Dendritic cell treated with granulocyte-macrophage colony-stimulating factor and Interleukin-4, amounts not matched to agents 40 ng/mL and 50 ng/mL, for 4 days (primary cell): ENCODE measurements at regions of chr14 and their contacts with region 1.

Region 1: DNA sequence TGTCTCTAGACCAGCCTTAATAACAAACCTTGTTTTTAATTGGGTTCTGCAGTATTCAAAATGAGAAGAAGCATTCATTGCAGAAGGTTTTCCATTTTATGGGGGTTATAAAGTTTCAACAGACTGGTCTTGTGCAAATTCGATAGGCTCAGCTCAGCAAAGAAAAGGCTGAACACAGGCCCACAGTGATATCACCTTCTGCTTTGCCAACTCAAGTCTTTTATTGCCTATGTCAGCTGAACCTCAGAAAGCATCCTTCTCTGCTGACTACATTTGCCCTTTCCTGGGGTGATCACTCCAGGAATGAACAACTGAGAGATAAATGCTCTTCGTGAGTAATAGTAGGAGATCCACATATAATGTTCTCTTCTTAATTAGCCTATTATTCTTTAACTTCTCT is 134.5 kb upstream of the CCDC175 start:
- H3K4me3 Mint-ChIP-seq: no peak overlapping the region
- H3K27ac Mint-ChIP-seq: no peak overlapping the region
- H3K4me1 Mint-ChIP-seq: peaks cover 3% of the 10 kb centered on the region
- H3K27me3 Mint-ChIP-seq: no peaks in the 10 kb centered on the region

Region 2: DNA sequence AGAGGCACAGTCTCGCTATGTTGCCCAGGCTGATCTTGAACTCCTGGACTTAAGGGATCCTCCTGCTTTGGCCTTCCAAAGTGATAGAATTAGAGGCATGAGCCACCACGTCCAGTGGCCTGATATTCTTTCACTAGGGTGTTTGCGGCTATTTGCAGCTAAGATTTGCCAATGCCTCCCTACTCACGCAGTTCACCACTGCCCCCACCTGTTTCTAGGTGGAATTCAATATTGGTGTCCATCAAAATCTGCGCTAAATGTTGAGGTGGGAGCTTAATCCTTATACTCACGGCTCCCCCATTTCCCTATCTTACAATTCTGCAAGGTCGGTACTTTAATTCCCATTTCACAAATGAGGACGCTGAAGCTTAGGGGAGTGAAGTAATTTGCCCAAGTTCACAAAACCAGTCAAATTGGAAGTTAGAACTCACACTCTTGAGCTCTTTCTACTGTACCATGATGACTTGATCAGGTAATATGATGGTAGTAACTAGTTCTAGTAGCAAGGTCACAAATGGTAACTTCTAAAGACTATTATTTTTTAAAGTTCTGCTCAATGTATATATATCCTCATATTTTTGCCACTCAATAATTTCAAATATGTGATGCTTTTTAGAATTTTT is 186.8 kb after region 1 on chr14:
- intact Hi-C with region 1: loop called (anchors 5 kb)
- H3K4me3 Mint-ChIP-seq: no peak overlapping the region
- H3K27ac Mint-ChIP-seq: peak overlapping the region; percentile 63
- H3K4me1 Mint-ChIP-seq: peaks cover 11% of the 10 kb centered on the region
- H3K27me3 Mint-ChIP-seq: no peaks in the 10 kb centered on the region

Region 3: GRCh38 chr14:59918824-59919569 is 207.9 kb after region 1 on chr14:
- intact Hi-C with region 1: loop called (anchors 5 kb)
- H3K4me3 Mint-ChIP-seq: peak overlapping the region; percentile 78
- H3K27ac Mint-ChIP-seq: peak overlapping the region; percentile 67
- H3K4me1 Mint-ChIP-seq: peaks cover 11% of the 10 kb centered on the region
- H3K27me3 Mint-ChIP-seq: peaks cover 32% of the 10 kb centered on the region